GM12878 (cell line): ENCODE measurements at regions of chr20 and their contacts with region 1.

Region 1: GRCh38 chr20:44217342-44218092 is 6.9 kb upstream of the OSER1 start:
- DNase-seq: no peak
- ATAC-seq: peak; percentile 80
- H3K4me3 ChIP-seq: no peak overlapping the region
- H3K27ac ChIP-seq: no peak overlapping the region
- H3K4me1 ChIP-seq: peaks cover 14% of the 10 kb centered on the region
- H3K27me3 ChIP-seq: no peaks in the 10 kb centered on the region
- CTCF ChIP-seq: peak; percentile 92 to 97 (median 94)
- EP300 ChIP-seq: no peak
- POLR2A ChIP-seq: no peak
- RAD21 ChIP-seq: peak; percentile 98

Region 2: GRCh38 chr20:43824309-43825050 is 393.0 kb before region 1 on chr20:
- CTCF ChIA-PET with region 1: no interaction called
- POLR2A ChIA-PET with region 1: no interaction called
- RAD21 ChIA-PET with region 1: no interaction called
- SMC1A ChIA-PET with region 1: no interaction called
- in situ Hi-C with region 1: no loop called
- intact Hi-C with region 1: no loop called
- DNase-seq: no peak
- ATAC-seq: peak; percentile 5
- H3K4me3 ChIP-seq: no peak overlapping the region
- H3K27ac ChIP-seq: no peak overlapping the region
- H3K4me1 ChIP-seq: peaks cover 24% of the 10 kb centered on the region
- H3K27me3 ChIP-seq: no peaks in the 10 kb centered on the region
- CTCF ChIP-seq: no peak
- EP300 ChIP-seq: no peak
- POLR2A ChIP-seq: no peak
- RAD21 ChIP-seq: no peak

Region 3: DNA sequence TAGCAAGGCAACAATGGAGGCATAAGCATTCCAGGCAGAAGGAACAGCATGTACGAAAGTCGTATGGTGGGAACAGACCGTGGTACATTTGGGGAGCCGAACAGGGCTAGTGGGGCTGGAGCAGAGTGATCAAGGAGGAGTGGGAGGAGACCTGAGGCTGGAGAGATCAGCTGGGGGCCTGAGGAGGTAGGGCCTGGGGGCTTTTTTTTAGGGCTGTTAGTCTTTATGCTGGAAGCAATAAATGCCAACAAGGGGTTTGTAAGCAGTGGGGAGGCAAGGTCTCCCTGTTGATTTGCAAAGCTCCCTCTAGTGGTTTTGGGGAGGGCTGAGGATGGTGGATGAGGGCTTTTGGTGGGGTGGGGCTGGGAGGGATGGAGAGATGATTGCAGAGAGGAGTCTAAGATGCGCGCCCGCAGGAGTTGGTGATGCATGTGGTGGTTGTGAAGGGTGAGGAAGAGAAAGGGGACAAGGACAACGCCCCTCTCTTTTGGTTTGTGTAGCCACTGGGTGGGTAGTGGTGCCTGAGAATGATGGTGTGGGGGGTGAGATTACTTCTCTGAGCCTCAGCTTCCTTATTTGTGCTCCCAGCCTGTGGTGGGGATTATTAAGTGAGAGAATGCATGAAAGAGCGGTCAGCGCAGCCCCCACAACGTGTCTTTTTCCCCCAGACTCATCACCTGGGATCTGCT is 377.0 kb before region 1 on chr20:
- CTCF ChIA-PET with region 1: no interaction called
- POLR2A ChIA-PET with region 1: no interaction called
- RAD21 ChIA-PET with region 1: no interaction called
- SMC1A ChIA-PET with region 1: no interaction called
- in situ Hi-C with region 1: no loop called
- intact Hi-C with region 1: no loop called
- DNase-seq: no peak
- ATAC-seq: peak; percentile 78
- H3K4me3 ChIP-seq: no peak overlapping the region
- H3K27ac ChIP-seq: peak overlapping the region; percentile 23; the same call in 1 of the 2 replicates
- H3K4me1 ChIP-seq: peaks cover 37% of the 10 kb centered on the region
- H3K27me3 ChIP-seq: no peaks in the 10 kb centered on the region
- CTCF ChIP-seq: peak; percentile 35 to 70 (median 51)
- EP300 ChIP-seq: no peak
- POLR2A ChIP-seq: no peak
- RAD21 ChIP-seq: peak; percentile 70

Region 4: GRCh38 chr20:44115762-44116644 is 101.5 kb before region 1 on chr20:
- CTCF ChIA-PET with region 1: interaction called, 14 read pairs
- POLR2A ChIA-PET with region 1: no interaction called
- RAD21 ChIA-PET with region 1: interaction called, 3 read pairs
- SMC1A ChIA-PET with region 1: interaction called, 4 read pairs
- in situ Hi-C with region 1: no loop called
- intact Hi-C with region 1: no loop called
- DNase-seq: no peak
- ATAC-seq: no peak
- H3K4me3 ChIP-seq: no peak overlapping the region
- H3K27ac ChIP-seq: no peak overlapping the region
- H3K4me1 ChIP-seq: no peaks in the 10 kb centered on the region
- H3K27me3 ChIP-seq: peaks cover 0 to 2% of the 10 kb centered on the region in 2 experiments; a peak in 2 of 4 replicates
- CTCF ChIP-seq: no peak
- EP300 ChIP-seq: no peak
- POLR2A ChIP-seq: no peak
- RAD21 ChIP-seq: no peak

Region 5: GRCh38 chr20:44151621-44152416 is 65.7 kb before region 1 on chr20:
- CTCF ChIA-PET with region 1: no interaction called
- POLR2A ChIA-PET with region 1: no interaction called
- RAD21 ChIA-PET with region 1: no interaction called
- SMC1A ChIA-PET with region 1: no interaction called
- in situ Hi-C with region 1: no loop called
- intact Hi-C with region 1: no loop called
- DNase-seq: no peak
- ATAC-seq: no peak
- H3K4me3 ChIP-seq: no peak overlapping the region
- H3K27ac ChIP-seq: no peak overlapping the region
- H3K4me1 ChIP-seq: no peaks in the 10 kb centered on the region
- H3K27me3 ChIP-seq: 0 out of 4 replicates have a peak, but pooled peaks cover 0 to under 1% of the 10 kb centered on the region in 2 experiments
- CTCF ChIP-seq: no peak
- EP300 ChIP-seq: no peak
- POLR2A ChIP-seq: no peak
- RAD21 ChIP-seq: no peak

Region 6: GRCh38 chr20:44234566-44235317 is 17.2 kb after region 1 on chr20:
- CTCF ChIA-PET with region 1: interaction called, 12 read pairs
- POLR2A ChIA-PET with region 1: no interaction called
- RAD21 ChIA-PET with region 1: interaction called, 3 read pairs
- SMC1A ChIA-PET with region 1: interaction called, 5 read pairs
- in situ Hi-C with region 1: no loop called
- intact Hi-C with region 1: no loop called
- DNase-seq: no peak
- ATAC-seq: no peak
- H3K4me3 ChIP-seq: no peak overlapping the region
- H3K27ac ChIP-seq: no peak overlapping the region
- H3K4me1 ChIP-seq: no peaks in the 10 kb centered on the region
- H3K27me3 ChIP-seq: no peaks in the 10 kb centered on the region; a peak in 1 of 4 replicates
- CTCF ChIP-seq: no peak
- EP300 ChIP-seq: no peak
- POLR2A ChIP-seq: no peak
- RAD21 ChIP-seq: no peak

Region 7: DNA sequence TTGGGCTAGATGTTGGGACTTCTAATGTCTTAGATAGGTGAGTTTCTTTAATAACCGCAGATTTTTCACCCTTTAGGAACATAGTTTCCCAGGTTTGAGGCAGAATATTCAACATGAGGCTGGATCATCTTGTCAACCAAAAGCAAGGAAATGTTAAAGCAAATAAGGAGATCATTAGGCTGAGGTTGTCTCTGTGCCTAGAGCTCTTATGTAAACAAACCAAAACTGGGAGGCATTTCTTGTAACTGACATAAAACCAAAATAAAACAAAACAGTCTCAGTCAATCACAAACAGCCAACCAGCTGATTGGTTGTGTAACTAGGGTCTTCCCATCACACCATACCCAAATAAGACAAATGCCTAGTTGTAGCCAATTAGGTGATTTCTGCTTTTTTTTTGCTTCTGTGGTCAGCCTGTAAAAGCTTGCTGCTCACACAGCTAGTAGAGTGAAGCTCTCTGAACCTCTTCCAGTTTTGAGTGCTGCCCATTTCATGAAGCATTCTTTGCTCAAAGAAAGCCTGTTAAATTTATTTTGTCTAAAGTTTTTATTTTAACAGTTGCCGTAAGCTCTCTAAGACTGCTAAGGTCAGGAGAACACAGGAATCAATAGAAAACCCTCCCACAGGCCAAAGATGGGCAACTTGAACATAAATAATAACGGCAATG is 102.4 kb after region 1 on chr20:
- CTCF ChIA-PET with region 1: interaction called, 257 read pairs
- POLR2A ChIA-PET with region 1: no interaction called
- RAD21 ChIA-PET with region 1: interaction called, 73 read pairs
- SMC1A ChIA-PET with region 1: interaction called, 118 read pairs
- in situ Hi-C with region 1: no loop called
- intact Hi-C with region 1: no loop called
- DNase-seq: no peak
- ATAC-seq: no peak
- H3K4me3 ChIP-seq: no peak overlapping the region
- H3K27ac ChIP-seq: no peak overlapping the region
- H3K4me1 ChIP-seq: no peaks in the 10 kb centered on the region
- H3K27me3 ChIP-seq: no peaks in the 10 kb centered on the region
- CTCF ChIP-seq: no peak
- EP300 ChIP-seq: no peak
- POLR2A ChIP-seq: no peak
- RAD21 ChIP-seq: no peak

Region 8: GRCh38 chr20:44460795-44461141 is 243.3 kb after region 1 on chr20:
- CTCF ChIA-PET with region 1: interaction called, 11 read pairs
- POLR2A ChIA-PET with region 1: no interaction called
- RAD21 ChIA-PET with region 1: interaction called, 3 read pairs
- SMC1A ChIA-PET with region 1: interaction called, 4 read pairs
- in situ Hi-C with region 1: no loop called
- intact Hi-C with region 1: loop called (anchors 5 kb)
- DNase-seq: no peak
- ATAC-seq: peak; percentile 64
- H3K4me3 ChIP-seq: no peak overlapping the region
- H3K27ac ChIP-seq: no peak overlapping the region
- H3K4me1 ChIP-seq: no peaks in the 10 kb centered on the region
- H3K27me3 ChIP-seq: no peaks in the 10 kb centered on the region
- CTCF ChIP-seq: peak; percentile 24 to 51 (median 40); a peak in 5 of 6 replicates
- EP300 ChIP-seq: no peak
- POLR2A ChIP-seq: no peak
- RAD21 ChIP-seq: peak; percentile 52